AG04450 (cell line): ENCODE measurements at regions of chr11 and their contacts with region 1.

Region 1: GRCh38 chr11:57249384-57250319 is 12.6 kb upstream of the APLNR start:
- DNase-seq: peak; percentile 39
- H3K4me3 ChIP-seq: no peak overlapping the region
- H3K27ac ChIP-seq: no peak overlapping the region
- H3K27me3 ChIP-seq: no peaks in the 10 kb centered on the region
- CTCF ChIP-seq: peak; percentile 96

Region 2: DNA sequence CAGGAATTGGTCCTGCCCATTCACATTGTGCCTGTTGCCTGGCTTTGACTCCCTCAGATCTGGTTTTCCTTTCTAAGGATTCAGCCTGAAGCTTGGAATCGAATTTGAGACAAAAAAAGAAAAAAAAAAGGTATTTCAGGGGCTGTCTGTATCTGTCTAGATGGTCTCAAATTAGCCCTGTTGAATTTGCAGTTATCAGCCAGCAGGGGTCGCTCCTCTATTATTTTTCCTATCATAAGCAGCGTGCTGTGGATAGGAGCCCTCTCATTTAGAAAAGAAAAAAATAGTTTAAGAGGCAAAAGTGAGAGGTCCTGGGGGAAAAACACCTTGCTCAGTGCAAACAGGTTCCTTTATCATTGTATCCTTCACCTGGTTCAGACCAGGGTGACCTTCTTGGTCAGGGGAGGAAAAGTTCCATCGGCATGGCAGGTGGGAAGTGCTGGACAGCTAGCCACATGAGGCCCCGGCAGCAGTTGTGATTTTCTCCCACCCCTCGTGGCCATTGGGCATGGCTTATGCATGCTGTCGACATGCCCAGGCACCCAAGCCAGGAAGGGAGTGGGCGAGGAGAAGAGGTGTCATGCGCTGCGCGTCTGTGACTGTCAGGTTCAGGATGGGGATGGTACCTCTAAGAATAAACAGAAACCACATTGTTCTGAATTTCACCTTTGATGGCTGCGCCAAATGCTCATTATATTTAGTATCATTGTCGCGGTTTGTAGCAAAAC is 247.8 kb before region 1 on chr11:
- CTCF ChIA-PET with region 1: interaction called, 60 read pairs
- POLR2A ChIA-PET with region 1: interaction called, 3 read pairs
- DNase-seq: no peak
- H3K4me3 ChIP-seq: no peak overlapping the region
- H3K27ac ChIP-seq: no peak overlapping the region
- H3K27me3 ChIP-seq: no peaks in the 10 kb centered on the region
- CTCF ChIP-seq: peak; percentile 56

Region 3: GRCh38 chr11:57111619-57112018 is 138.0 kb before region 1 on chr11:
- CTCF ChIA-PET with region 1: interaction called, 331 read pairs
- POLR2A ChIA-PET with region 1: no interaction called
- DNase-seq: no peak
- H3K4me3 ChIP-seq: no peak overlapping the region
- H3K27ac ChIP-seq: no peak overlapping the region
- H3K27me3 ChIP-seq: no peaks in the 10 kb centered on the region
- CTCF ChIP-seq: no peak

Region 4: GRCh38 chr11:57205041-57205671 is 44.5 kb before region 1 on chr11:
- CTCF ChIA-PET with region 1: interaction called, 119 read pairs
- POLR2A ChIA-PET with region 1: no interaction called
- DNase-seq: no peak
- H3K4me3 ChIP-seq: no peak overlapping the region
- H3K27ac ChIP-seq: no peak overlapping the region
- H3K27me3 ChIP-seq: peaks cover 46% of the 10 kb centered on the region
- CTCF ChIP-seq: peak; percentile 28

Region 5: GRCh38 chr11:57263351-57263750 is 13.7 kb after region 1 on chr11:
- CTCF ChIA-PET with region 1: interaction called, 36 read pairs
- POLR2A ChIA-PET with region 1: no interaction called
- DNase-seq: no peak
- H3K4me3 ChIP-seq: no peak overlapping the region
- H3K27ac ChIP-seq: no peak overlapping the region
- H3K27me3 ChIP-seq: no peaks in the 10 kb centered on the region
- CTCF ChIP-seq: no peak

Region 6: GRCh38 chr11:57324886-57325734 is 75.5 kb after region 1 on chr11 and contains the start of gene TNKS1BP1:
- CTCF ChIA-PET with region 1: interaction called, 23 read pairs
- POLR2A ChIA-PET with region 1: no interaction called
- DNase-seq: peak; percentile 94
- H3K4me3 ChIP-seq: peak within 1 kb of the TSS; percentile 83
- H3K27ac ChIP-seq: peak within 1 kb of the TSS; percentile 99
- H3K27me3 ChIP-seq: no peaks in the 10 kb centered on the region
- CTCF ChIP-seq: no peak
- polyA plus RNA-seq, gene TNKS1BP1: 59.4 and 63.8 TPM in 2 replicates

Region 7: DNA sequence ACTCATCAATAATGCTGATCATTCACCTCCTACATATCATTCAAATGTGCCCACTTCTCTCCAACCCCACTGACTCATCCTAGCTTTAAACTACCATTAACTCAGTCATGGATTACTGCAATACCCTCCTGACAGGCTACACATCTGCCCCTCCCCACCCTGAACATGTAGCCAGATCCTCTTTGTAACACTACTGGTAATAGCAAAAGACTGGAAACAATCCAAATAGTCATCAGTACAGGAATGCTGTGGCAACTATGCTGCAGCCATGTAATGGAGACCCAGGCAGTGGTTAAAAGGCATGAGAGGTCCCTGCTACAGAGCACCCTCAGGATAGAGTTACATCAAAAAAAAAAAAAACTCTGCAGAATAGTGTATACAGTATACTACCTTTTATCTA is 160.6 kb after region 1 on chr11:
- CTCF ChIA-PET with region 1: no interaction called
- POLR2A ChIA-PET with region 1: no interaction called
- DNase-seq: peak; percentile 81
- H3K4me3 ChIP-seq: no peak overlapping the region
- H3K27ac ChIP-seq: peak overlapping the region; percentile 39
- H3K27me3 ChIP-seq: no peaks in the 10 kb centered on the region
- CTCF ChIP-seq: no peak

Region 8: GRCh38 chr11:57482782-57483561 is 233.3 kb after region 1 on chr11:
- CTCF ChIA-PET with region 1: no interaction called
- POLR2A ChIA-PET with region 1: no interaction called
- DNase-seq: no peak
- H3K4me3 ChIP-seq: peak overlapping the region; percentile 54
- H3K27ac ChIP-seq: no peak overlapping the region
- H3K27me3 ChIP-seq: peaks cover 24% of the 10 kb centered on the region
- CTCF ChIP-seq: peak; percentile 69

Region 9: DNA sequence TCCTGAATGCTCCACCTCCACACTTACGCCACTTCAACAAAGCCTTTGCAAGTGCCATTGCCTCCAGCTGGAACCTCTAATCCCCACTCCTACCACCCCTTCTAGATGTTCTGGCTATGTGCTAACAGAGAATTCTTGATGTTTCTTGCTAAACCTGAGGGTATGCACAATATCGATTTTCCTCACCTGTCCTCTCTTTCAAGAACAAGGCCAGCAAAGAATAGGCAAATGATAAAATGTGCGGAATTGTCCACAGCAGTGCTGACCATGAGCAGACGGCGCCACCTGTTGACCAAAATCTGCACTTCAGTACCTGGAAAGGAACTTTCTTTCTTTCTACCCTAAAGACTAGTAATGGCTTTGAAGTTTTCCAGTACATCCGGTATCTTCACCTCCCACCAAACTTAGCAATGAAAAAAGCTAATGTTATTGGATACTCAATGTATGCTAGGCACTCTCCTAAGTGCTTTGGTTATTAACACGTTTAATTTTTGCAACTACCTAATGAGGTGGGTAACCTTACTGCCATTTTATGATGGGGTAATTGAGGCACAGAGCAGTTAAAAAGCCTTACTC is 277.5 kb after region 1 on chr11:
- CTCF ChIA-PET with region 1: no interaction called
- POLR2A ChIA-PET with region 1: no interaction called
- DNase-seq: no peak
- H3K4me3 ChIP-seq: no peak overlapping the region
- H3K27ac ChIP-seq: no peak overlapping the region
- H3K27me3 ChIP-seq: no peaks in the 10 kb centered on the region
- CTCF ChIP-seq: peak; percentile 94

Region 10: DNA sequence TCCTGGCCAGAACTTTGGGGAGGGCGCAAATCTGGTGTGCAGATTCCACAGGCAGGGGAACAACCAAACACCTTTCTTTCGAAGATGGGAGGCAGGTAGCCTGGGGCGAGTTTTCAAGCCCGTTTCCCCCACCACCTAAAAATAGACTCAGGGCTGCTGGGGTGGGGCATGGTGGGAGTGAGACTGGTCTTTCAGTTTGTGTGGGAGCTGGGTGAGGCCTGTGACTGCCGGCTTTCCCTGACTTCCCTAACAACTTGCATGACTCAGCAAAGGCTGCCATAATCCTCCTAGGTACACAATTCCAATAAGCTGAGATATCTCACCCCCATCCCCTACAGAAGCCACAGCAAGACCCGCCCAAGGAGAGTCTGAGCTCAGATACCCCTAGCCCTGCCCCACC is 1196.6 kb after region 1 on chr11:
- CTCF ChIA-PET with region 1: no interaction called
- POLR2A ChIA-PET with region 1: no interaction called
- DNase-seq: no peak
- H3K4me3 ChIP-seq: no peak overlapping the region
- H3K27ac ChIP-seq: no peak overlapping the region
- H3K27me3 ChIP-seq: no peaks in the 10 kb centered on the region
- CTCF ChIP-seq: no peak